ENCODE measurements at regions of chr10 and their contacts with region 1.

Region 1: GRCh38 chr10:15122477-15123030 is 25.4 kb downstream of the RPP38 start:
- DNase-seq: peak; percentile 80
- ATAC-seq: peak; percentile 94
- H3K4me3 ChIP-seq: peak overlapping the region; percentile 40; the same call in 1 of the 2 replicates
- H3K27ac ChIP-seq: peak overlapping the region; percentile 85
- H3K4me1 ChIP-seq: peaks cover 17% of the 10 kb centered on the region
- H3K27me3 ChIP-seq: no peaks in the 10 kb centered on the region
- CTCF ChIP-seq: no peak
- EP300 ChIP-seq: peak; percentile 83 to 92; a peak in 3 of 4 replicates
- POLR2A ChIP-seq: no peak
- RAD21 ChIP-seq: no peak

Region 2: DNA sequence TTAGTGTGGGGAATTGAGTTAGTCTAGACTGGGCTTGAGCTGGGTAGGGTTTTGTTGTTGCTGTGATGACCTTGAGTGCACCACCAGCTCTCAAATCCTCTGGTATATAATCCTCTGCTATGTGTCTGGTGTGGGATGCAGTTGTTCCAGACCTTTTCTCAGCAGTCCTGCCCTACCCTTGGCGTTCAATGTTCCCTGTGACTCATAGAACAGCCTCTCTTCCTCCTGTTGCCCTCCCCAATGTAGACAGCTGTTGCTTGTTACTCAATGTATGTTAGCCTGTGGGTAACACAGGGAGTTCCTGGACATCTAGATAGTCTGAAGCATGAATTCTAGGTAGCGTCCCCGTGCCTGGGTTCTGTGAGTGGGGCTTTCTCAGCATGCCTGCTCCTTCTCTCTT is 53.8 kb before region 1 on chr10:
- CTCF ChIA-PET with region 1: no interaction called
- POLR2A ChIA-PET with region 1: no interaction called
- RAD21 ChIA-PET with region 1: no interaction called
- SMC1A ChIA-PET with region 1: no interaction called
- in situ Hi-C with region 1: no loop called
- intact Hi-C with region 1: no loop called
- DNase-seq: no peak
- ATAC-seq: no peak; the same call in 2 of the 3 replicates
- H3K4me3 ChIP-seq: no peak overlapping the region
- H3K27ac ChIP-seq: no peak overlapping the region
- H3K4me1 ChIP-seq: no peaks in the 10 kb centered on the region
- H3K27me3 ChIP-seq: no peaks in the 10 kb centered on the region; a peak in 1 of 4 replicates
- CTCF ChIP-seq: no peak
- EP300 ChIP-seq: no peak
- POLR2A ChIP-seq: no peak
- RAD21 ChIP-seq: no peak

Region 3: DNA sequence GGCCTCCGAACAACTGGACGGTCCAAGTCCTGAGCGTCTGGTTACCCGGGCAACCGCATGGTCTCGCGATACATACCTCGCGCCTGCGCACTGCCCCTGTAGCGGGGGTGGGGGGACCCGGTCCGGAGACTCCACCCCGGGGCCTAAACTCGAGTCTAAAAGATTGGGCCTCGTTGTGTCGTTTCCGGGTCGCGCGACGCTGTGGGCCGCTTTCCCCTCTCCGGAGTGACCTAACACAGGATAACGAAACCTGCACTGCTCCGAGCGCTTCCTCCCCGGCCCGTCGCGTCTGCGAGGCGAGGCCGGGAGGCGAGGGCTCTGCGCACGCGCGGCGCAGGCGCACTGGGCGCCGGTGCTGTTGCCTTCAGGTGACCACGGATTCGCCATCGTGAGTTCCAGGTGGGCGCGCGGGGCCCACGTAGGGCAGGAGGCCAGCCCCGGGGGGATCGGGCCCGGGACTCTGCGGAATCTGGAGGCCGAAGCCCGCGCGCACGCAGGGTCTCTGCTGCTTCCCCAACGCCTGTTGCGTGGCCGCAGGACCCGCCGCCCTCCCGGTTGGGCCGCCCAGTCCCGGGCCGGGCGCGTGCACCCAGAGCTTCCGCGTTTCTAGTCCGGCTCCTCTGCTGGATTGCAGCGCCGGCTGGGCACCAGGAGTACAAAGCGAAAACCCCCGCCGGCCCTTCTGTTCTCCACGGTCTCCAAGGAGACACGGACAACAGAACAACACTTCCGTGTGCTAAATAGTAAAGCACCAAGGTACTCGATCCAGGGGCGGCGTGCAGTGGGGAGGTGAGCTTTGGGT is 25.3 kb before region 1 on chr10 and contains the start of gene RPP38:
- CTCF ChIA-PET with region 1: interaction called, 3 read pairs
- POLR2A ChIA-PET with region 1: no interaction called
- RAD21 ChIA-PET with region 1: no interaction called
- SMC1A ChIA-PET with region 1: interaction called, 10 read pairs
- in situ Hi-C with region 1: no loop called
- intact Hi-C with region 1: no loop called
- DNase-seq: peak; percentile 70
- ATAC-seq: peak; percentile 89
- H3K4me3 ChIP-seq: peak within 1 kb of the TSS; percentile 97
- H3K27ac ChIP-seq: peak within 1 kb of the TSS; percentile 70
- H3K4me1 ChIP-seq: peaks cover 5% of the 10 kb centered on the region
- H3K27me3 ChIP-seq: no peaks in the 10 kb centered on the region
- CTCF ChIP-seq: no peak
- EP300 ChIP-seq: no peak
- POLR2A ChIP-seq: peak; percentile 99
- RAD21 ChIP-seq: 0 out of 2 replicates have a peak, but pooled peaks have one; percentile 3
- polyA plus RNA-seq, gene RPP38: 27.7 to 38.4 TPM

Region 4: DNA sequence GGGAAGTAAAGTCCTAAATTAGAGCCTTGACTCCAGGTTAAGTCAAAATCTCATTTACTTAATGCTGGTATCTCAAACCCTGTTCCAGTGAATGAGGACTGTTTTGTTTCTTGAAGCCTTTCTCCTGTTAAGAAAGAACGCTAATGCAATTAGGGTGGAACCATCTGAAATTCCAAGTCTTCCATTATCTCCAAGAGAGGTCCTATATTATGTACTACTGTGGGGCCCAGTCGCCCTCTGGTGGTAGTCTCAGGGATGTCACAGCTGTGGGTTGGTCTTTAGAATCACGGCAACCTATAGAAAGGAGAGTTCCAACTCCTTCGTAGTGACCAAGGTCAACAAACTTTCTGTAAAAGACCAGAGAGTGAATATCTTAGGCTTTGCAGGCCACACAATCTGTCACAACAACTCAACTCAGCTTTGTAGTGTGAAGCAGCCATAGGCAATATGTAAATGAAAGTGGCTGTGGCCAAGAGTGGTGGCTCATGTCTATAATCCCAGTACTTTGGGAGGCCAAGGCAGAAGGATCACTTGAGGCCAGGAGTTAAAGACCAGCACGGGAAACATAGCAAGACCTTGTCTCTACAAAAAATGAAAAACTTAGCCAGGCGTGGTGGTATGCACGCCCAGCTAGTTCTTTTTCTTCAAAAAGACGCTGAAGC is 16.1 kb before region 1 on chr10:
- CTCF ChIA-PET with region 1: interaction called, 20 read pairs
- POLR2A ChIA-PET with region 1: no interaction called
- RAD21 ChIA-PET with region 1: interaction called, 6 read pairs
- SMC1A ChIA-PET with region 1: interaction called, 7 read pairs
- in situ Hi-C with region 1: no loop called
- intact Hi-C with region 1: no loop called
- DNase-seq: peak; percentile 26
- ATAC-seq: peak; percentile 99
- H3K4me3 ChIP-seq: no peak overlapping the region
- H3K27ac ChIP-seq: no peak overlapping the region
- H3K4me1 ChIP-seq: no peaks in the 10 kb centered on the region
- H3K27me3 ChIP-seq: no peaks in the 10 kb centered on the region
- CTCF ChIP-seq: peak; percentile 90 to 95 (median 93)
- EP300 ChIP-seq: no peak
- POLR2A ChIP-seq: no peak
- RAD21 ChIP-seq: peak; percentile 91

Region 5: GRCh38 chr10:15141136-15142054 is 18.8 kb after region 1 on chr10:
- CTCF ChIA-PET with region 1: interaction called, 40 read pairs
- POLR2A ChIA-PET with region 1: interaction called, 40 read pairs
- RAD21 ChIA-PET with region 1: interaction called, 48 read pairs
- SMC1A ChIA-PET with region 1: interaction called, 127 read pairs
- in situ Hi-C with region 1: no loop called
- intact Hi-C with region 1: no loop called
- DNase-seq: peak; percentile 85
- ATAC-seq: peak; percentile 96
- H3K4me3 ChIP-seq: peak overlapping the region; percentile 19; the same call in 1 of the 2 replicates
- H3K27ac ChIP-seq: peak overlapping the region; percentile 7; the same call in 1 of the 2 replicates
- H3K4me1 ChIP-seq: peaks cover 16% of the 10 kb centered on the region
- H3K27me3 ChIP-seq: no peaks in the 10 kb centered on the region
- CTCF ChIP-seq: no peak
- EP300 ChIP-seq: peak; percentile 98 to 99
- POLR2A ChIP-seq: no peak
- RAD21 ChIP-seq: no peak

Region 6: DNA sequence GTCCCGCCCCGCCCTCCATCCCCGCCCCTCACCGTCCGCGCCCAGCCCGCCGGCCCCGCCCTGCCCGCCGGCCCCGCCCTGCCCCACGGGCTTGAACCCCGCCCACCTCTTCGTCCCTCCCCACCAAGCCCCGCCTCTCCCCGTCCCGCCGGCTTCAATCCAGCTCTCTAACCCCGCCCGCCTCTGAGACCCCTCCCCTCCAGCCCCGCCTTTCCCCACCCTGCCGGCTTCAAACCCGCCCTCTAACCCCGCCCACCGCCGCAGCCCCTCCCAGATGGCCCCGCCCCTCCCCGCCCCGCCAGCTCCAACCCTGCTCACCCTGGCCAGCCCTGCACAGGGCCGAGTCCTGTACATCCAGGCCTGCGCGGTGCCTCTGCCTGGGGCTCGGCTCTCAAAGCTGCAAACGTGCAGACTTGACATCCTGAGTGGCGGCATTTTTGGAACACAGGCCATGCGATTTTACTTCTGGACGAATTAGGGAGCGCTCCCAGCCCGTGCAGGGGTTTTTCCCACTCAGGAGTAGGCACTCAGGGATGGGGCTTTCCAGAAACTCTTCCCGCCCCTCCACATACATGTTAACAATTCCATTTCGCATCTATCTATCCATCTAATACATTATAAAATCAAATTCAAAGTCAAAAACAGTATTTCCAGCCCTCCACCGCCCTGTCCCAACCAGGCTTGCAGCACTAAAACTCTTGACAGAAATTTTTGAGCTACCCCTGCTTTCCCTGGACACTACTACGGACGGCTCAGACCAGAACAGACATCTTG is 46.4 kb after region 1 on chr10:
- CTCF ChIA-PET with region 1: interaction called, 25 read pairs
- POLR2A ChIA-PET with region 1: interaction called, 13 read pairs
- RAD21 ChIA-PET with region 1: interaction called, 39 read pairs
- SMC1A ChIA-PET with region 1: interaction called, 36 read pairs
- in situ Hi-C with region 1: no loop called
- intact Hi-C with region 1: no loop called
- DNase-seq: peak; percentile 48
- ATAC-seq: peak; percentile 66
- H3K4me3 ChIP-seq: no peak overlapping the region
- H3K27ac ChIP-seq: no peak overlapping the region
- H3K4me1 ChIP-seq: peaks cover 8% of the 10 kb centered on the region; the same call in 1 of the 2 replicates
- H3K27me3 ChIP-seq: no peaks in the 10 kb centered on the region; a peak in 1 of 4 replicates
- CTCF ChIP-seq: no peak
- EP300 ChIP-seq: no peak
- POLR2A ChIP-seq: no peak
- RAD21 ChIP-seq: no peak

Region 7: DNA sequence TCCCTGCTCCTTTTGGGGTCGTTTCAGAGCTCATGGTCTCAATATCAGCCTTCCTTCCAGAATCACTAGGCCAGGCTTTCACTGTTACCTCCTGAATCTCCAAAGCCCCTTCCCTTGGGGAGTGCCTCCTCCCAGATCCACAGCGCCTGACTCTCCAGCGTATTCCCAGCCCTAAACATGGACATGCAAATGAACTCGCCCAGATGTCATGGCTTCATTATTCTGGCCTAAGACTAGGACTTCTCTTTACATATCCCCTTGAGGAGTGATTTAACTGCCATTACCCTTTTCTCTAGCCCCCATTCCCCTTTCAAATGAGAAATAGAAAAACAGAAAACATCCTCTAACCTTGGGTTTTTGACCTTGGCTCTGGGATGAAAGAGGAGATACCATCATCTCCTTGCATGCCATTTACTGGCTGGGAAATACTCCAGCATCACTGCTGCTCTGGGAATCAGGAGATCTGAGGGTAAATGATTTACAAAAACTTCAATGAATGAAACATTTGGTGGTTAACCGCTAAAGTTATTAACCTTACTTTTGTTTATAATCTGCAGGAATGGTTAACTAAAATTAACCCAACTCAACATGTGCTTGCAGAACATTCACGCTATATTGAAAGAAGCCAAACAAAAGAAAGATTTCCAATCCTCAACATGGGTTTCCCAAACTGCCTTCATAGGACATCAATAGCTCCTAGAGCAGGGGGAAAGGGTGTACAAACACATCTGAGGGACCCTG is 211.5 kb after region 1 on chr10:
- CTCF ChIA-PET with region 1: no interaction called
- POLR2A ChIA-PET with region 1: no interaction called
- RAD21 ChIA-PET with region 1: no interaction called
- SMC1A ChIA-PET with region 1: no interaction called
- in situ Hi-C with region 1: no loop called
- intact Hi-C with region 1: no loop called
- DNase-seq: no peak
- ATAC-seq: no peak
- H3K4me3 ChIP-seq: no peak overlapping the region
- H3K27ac ChIP-seq: no peak overlapping the region
- H3K4me1 ChIP-seq: no peaks in the 10 kb centered on the region
- H3K27me3 ChIP-seq: no peaks in the 10 kb centered on the region
- CTCF ChIP-seq: no peak
- EP300 ChIP-seq: no peak
- POLR2A ChIP-seq: no peak
- RAD21 ChIP-seq: no peak

Measured in GM12878 (cell line).